ENCODE measurements at regions of chr10 and their contacts with region 1.

Region 1: DNA sequence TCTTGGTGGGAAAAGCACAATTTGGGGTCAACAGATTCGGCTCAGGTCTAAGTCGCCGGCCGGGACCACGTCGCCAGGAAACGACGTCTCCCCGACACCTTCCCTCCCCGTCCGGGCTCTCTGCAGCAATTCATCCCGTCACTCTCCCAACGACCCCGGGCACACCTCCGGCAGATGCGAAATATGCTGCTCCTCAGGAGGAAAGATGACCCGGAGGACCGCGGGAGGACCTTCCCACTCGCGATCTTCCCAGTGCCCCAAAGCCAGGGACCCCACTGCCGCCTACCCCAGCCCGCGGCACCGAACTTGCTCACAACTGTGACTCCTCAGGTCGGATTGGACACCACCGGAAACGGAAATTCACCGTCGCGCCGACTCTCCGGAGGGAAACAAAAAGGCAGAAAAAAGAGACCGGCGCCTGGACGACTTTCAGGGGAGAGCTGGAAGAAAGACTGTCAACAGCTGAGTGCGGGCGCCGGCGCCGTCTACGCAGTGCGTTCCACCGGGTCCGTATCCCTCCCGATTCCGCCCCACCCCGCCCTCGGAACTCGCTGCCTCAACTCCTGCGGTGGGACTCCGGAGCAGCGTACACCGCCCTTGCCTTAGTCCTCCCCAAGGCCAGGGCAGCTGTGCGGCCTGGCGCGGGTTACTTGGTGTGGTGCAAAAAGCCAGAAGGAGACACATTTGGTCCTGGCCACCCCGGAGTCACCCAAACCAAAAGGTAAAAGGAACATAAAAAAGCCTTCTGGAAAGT is 13.8 kb upstream of the SEC24C start:
- H3K4me3 ChIP-seq: peak overlapping the region; percentile 99
- H3K27ac ChIP-seq: peak overlapping the region; percentile 48
- H3K4me1 ChIP-seq: no peaks in the 10 kb centered on the region
- CTCF ChIP-seq: no peak

Region 2: DNA sequence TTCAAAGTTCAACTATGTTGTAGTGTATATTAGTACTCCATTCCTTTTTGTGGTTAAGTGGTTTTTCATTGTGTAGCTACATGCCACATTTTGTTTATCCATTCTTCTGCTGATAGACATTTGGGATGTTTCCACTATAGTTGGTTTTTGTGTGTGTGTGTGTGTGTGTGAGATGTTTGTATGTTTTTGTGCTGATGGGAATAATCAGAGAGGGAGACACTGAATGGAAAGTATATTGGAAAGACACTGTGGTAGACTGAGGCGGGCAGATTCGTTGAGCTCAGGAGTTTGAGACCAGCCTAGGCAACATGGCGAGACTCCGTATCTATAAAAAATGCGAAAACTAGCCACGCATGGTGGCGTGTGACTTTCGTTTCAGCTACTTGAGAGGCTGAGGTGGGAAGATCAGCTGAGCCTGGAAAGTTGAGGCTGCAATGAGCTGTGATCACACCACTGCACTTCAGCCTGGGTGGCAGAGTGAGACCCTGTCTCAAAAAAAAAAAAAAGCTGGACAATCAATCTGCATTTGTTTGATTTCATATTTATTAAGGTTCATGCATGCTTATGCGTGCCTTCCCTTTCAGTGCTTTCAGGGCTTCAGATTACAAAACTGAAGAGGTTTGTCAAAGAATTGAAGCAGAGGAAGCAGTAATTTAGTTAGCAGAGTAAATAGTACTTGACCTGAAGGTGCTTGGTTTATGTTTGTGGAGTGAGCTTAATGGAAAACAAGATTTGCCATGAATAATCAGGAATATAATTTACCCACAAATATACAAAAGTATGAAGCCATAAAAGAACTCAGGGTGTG is 28.6 kb after region 1 on chr10:
- CTCF ChIA-PET with region 1: interaction called, 10 read pairs
- POLR2A ChIA-PET with region 1: no interaction called
- H3K4me3 ChIP-seq: no peak overlapping the region
- H3K27ac ChIP-seq: no peak overlapping the region
- H3K4me1 ChIP-seq: no peaks in the 10 kb centered on the region
- CTCF ChIP-seq: no peak